Posterior cingulate gyrus (tissue), 11 donors: ENCODE measurements at regions of chr4 and their contacts with region 1.

Region 1: GRCh38 chr4:78517050-78517652 is 34.4 kb upstream of the ANXA3 start:
- DNase-seq: no peak

Region 2: DNA sequence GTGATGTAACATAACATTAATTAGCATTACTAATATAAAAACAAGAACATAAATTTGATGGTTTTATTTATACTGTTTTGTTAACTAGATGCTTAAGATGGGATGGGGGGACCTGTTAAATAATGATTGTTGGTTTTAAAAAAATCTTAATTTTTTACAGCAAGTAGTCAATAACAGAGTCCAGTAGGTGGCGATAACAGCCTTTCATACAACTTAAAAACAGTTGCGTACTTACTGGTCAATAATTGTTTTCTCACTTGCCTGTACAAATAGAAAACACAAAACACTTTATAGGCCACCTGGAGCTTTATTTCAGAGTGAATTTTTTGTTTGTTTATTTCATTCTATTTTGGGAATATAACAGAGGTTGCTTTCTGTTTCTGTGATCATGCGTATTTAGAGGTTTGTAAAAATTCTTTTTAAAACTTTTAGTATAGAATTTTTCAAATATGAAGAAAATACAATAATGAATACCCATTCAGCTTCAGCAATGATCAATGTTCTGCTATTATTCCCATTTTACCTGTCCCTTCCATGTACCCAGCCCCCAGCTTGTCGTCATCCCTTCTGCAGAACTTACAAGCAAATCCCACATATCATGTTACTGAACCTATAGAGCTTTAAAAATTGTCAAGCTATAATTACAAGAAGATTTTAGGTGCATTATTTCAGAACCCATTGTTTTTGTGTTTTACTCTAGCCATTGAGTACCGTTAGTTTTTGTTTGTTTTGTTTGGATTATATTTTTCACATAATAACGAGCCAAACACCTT is 557.4 kb before region 1 on chr4:
- intact Hi-C with region 1: loop called (anchors 5 kb)
- DNase-seq: no peak

Region 3: GRCh38 chr4:78059524-78059889 is 457.6 kb before region 1 on chr4:
- intact Hi-C with region 1: loop called (anchors 2 kb)
- DNase-seq: peak in 5 of 10 donors; percentile 16 to 86 (median 20)

Region 4: GRCh38 chr4:78569291-78569821 is 52.2 kb after region 1 on chr4:
- intact Hi-C with region 1: no loop called
- DNase-seq: no peak